OCI-LY7 (cell line): ENCODE measurements at regions of chr7 and their contacts with region 1.

Region 1: DNA sequence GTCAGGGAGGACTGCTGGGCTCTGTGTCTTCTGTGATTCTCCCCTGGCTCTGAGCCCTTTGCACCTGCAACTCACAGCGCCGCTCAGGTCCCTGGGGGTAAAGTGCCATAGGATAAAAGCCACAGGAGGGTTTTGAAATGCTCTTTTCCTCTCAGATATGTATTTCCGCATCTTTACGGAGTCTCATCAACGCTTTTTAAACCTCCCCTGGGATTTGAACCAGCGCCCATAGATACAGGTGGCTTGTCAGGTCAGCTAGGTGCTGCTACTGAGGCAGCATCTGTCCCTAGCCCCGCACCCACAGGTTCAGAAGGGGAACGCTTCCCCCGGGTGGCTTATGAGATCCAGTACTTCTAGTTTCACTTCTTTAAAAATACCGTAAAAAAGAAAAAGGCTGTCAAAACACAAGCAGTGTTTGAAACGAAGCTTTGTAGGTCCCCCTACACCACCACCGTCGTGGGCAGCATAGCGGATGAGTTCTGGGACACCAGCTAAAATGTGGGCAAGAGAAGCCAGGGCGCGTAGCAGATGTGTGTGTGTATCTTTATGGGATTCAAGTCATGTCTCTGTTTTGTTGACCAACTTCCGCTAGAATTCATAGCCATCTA is 173.5 kb downstream of the CUX1 start:
- DNase-seq: peak; percentile 100
- H3K4me3 ChIP-seq: peak overlapping the region; percentile 58
- H3K27ac ChIP-seq: peak overlapping the region; percentile 97
- H3K4me1 ChIP-seq: peaks cover 97% of the 10 kb centered on the region
- CTCF ChIP-seq: peak; percentile 56; the same call in 1 of the 2 replicates

Region 2: DNA sequence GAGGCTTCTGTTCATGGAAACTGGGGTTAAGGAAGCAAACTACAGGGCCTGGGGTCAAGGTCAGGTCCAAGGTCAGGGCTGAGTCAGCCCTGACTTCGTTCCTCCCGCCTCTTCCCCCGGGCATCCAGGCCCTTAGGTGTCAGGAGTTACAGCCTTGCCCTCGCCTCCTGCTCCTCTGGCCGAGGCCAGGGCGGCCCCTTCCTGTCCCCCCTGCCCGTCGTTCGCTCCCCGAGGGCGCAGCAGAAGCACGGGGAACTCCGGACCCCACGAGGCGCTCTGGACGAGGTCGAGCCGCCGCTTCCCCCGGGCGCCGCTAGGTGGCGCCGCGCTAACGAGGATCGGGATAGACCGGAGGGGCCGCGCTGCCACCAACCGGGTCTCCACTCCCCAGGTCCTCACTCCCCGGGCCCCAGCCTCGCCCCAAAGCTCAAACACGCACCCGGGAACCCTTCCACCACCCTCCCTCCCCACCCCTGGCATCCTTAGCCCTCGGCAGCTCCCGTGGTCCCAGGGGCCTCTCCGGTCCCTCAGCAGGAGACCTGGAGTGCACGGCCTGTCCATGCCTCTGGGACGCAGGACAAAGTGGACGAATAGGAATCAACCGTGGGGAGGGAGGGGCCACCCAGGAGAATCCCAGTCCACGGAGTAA is 302.6 kb before region 1 on chr7:
- CTCF ChIA-PET with region 1: no interaction called
- POLR2A ChIA-PET with region 1: no interaction called
- intact Hi-C with region 1: loop called (anchors 5 kb)
- DNase-seq: peak; percentile 88
- H3K4me3 ChIP-seq: peak overlapping the region; percentile 23
- H3K27ac ChIP-seq: peak overlapping the region; percentile 45
- H3K4me1 ChIP-seq: peaks cover 12% of the 10 kb centered on the region
- CTCF ChIP-seq: peak; percentile 92

Region 3: GRCh38 chr7:101733713-101734475 is 257.0 kb before region 1 on chr7:
- CTCF ChIA-PET with region 1: no interaction called
- POLR2A ChIA-PET with region 1: no interaction called
- intact Hi-C with region 1: no loop called
- DNase-seq: no peak
- H3K4me3 ChIP-seq: no peak overlapping the region
- H3K27ac ChIP-seq: no peak overlapping the region
- H3K4me1 ChIP-seq: peaks cover 18% of the 10 kb centered on the region
- CTCF ChIP-seq: no peak

Region 4: DNA sequence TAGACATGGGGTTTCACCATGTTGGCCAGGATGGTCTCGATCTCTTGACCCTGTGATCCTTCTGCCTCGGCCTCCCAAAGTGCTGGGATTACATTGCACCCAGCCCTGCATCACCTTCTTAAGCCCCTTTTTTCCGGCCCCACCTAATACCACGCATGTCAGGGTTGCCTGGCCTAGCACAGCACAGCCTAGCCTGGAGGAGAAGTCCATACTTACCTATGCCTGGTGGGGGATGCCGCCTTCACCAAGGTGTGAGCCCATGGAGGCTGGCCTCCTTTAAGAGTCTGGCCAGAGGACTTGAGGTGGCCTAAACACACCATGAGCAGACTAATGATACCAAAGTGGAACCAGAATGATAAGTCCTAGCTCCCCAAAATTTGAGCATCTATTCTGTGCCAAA is 195.5 kb before region 1 on chr7:
- CTCF ChIA-PET with region 1: no interaction called
- POLR2A ChIA-PET with region 1: interaction called, 4 read pairs
- intact Hi-C with region 1: loop called (anchors 5 kb)
- DNase-seq: no peak
- H3K4me3 ChIP-seq: no peak overlapping the region
- H3K27ac ChIP-seq: no peak overlapping the region
- H3K4me1 ChIP-seq: peaks cover 48% of the 10 kb centered on the region
- CTCF ChIP-seq: no peak

Region 5: DNA sequence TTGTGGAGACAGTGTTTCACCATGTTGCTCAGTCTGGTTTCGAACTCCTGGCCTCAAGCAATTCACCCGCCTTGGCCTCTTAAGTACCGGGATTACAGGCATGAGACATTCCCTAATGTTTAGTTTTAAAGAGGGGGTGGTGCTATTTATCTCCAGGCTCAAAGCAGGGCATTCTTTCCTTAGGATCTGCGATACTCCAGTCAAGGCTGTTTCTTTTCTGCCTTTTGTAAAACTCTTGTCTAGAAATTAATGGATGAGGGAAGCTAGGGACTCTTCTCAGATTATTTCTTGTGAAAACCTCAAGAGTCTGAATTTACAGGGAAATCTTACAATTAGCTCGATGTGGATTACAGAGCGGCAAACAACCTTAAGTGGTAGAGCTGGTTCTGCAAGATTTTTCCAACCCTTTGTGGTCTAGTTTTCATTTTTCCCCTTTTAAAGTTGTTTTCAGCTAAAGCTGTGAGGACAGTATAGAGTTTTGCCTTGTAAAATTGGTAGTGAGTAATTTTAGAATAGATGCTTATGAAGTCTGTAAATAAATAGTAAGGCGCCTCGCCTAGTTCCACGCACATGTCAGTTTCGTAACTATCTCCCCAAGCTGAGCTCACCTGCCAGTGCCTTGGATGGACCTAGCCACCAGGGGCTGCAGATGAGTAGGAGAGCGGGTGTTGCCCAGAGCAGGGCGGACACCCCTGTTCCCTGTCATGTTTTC is 120.4 kb before region 1 on chr7:
- CTCF ChIA-PET with region 1: interaction called, 4 read pairs
- POLR2A ChIA-PET with region 1: interaction called, 16 read pairs
- intact Hi-C with region 1: loop called (anchors 1 kb)
- DNase-seq: peak; percentile 90
- H3K4me3 ChIP-seq: peak overlapping the region; percentile 57
- H3K27ac ChIP-seq: peak overlapping the region; percentile 97
- H3K4me1 ChIP-seq: peaks cover 100% of the 10 kb centered on the region
- CTCF ChIP-seq: peak; percentile 78

Region 6: DNA sequence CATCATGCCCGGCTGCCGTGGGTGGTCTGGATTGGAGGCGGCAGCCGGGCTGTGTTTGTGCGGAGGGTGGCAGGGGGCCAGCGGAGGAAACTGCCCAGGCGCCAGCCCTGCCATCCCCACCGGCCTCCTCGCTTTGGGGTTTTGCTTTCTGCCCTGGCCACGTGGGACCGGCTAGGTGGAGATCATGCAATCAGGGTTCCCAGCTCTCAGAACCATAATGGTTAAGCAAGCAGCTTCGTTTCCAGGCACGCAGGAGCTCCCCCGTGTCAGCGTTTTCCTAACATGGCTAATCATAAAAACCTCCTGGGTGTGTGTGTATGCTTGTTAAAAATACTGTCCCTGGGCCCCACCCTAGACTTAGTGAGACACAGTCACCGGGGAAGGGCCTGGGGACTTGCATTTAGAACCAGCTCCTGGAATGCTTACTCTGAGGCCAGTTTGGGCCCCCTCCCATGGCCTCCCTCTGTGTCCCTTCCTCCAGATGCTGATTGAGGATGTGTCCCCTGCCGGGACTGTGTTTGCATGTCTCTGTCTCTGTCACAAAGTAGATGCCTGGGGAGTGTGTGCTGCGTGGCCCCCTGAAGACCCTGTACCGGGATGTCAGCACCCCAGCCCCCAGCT is 54.2 kb before region 1 on chr7:
- CTCF ChIA-PET with region 1: interaction called, 3 read pairs
- POLR2A ChIA-PET with region 1: interaction called, 4 read pairs
- intact Hi-C with region 1: loop called (anchors 2 kb)
- DNase-seq: peak; percentile 27
- H3K4me3 ChIP-seq: peak overlapping the region; percentile 20
- H3K27ac ChIP-seq: peak overlapping the region; percentile 82
- H3K4me1 ChIP-seq: peaks cover 100% of the 10 kb centered on the region
- CTCF ChIP-seq: no peak

Region 7: DNA sequence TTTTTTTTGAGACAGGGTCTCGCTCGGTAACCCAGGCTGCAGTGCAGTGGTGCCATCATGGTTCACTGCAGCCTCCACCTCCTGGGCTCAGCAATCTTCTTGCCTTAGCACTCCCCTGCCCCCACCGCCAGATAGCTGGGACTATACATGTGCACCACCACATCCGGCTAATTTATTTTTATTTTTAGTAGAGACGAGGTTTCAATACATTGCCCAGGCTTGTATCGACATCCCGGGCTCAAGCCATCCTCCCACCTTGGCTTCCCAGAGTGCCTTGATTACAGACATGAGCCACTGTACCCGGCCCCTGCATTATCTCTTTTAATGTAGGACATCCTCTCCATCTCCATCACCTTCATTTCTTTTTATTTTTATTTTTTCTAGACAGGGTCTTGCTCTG is 39.8 kb after region 1 on chr7:
- CTCF ChIA-PET with region 1: no interaction called
- POLR2A ChIA-PET with region 1: interaction called, 6 read pairs
- intact Hi-C with region 1: loop called (anchors 1 kb)
- DNase-seq: peak; percentile 91
- H3K4me3 ChIP-seq: peak overlapping the region; percentile 39
- H3K27ac ChIP-seq: peak overlapping the region; percentile 84
- H3K4me1 ChIP-seq: peaks cover 74% of the 10 kb centered on the region
- CTCF ChIP-seq: no peak